Endothelial cell of umbilical vein (primary cell): ENCODE measurements at regions of chr4 and their contacts with region 1.

Region 1: GRCh38 chr4:98658287-98659105 is at the start of gene TSPAN5:
- DNase-seq: peak; percentile 82
- H3K4me3 ChIP-seq: peak within 1 kb of the TSS; percentile 90 to 97 (median 95)
- H3K27ac ChIP-seq: peak within 1 kb of the TSS; percentile 94
- H3K4me1 ChIP-seq: peaks cover 61% of the 10 kb centered on the region
- H3K27me3 ChIP-seq: no peaks in the 10 kb centered on the region
- CTCF ChIP-seq: no peak
- POLR2A ChIP-seq: peak; percentile 37
- total RNA-seq, gene TSPAN5: 37.6 and 45.1 TPM in 2 replicates

Region 2: DNA sequence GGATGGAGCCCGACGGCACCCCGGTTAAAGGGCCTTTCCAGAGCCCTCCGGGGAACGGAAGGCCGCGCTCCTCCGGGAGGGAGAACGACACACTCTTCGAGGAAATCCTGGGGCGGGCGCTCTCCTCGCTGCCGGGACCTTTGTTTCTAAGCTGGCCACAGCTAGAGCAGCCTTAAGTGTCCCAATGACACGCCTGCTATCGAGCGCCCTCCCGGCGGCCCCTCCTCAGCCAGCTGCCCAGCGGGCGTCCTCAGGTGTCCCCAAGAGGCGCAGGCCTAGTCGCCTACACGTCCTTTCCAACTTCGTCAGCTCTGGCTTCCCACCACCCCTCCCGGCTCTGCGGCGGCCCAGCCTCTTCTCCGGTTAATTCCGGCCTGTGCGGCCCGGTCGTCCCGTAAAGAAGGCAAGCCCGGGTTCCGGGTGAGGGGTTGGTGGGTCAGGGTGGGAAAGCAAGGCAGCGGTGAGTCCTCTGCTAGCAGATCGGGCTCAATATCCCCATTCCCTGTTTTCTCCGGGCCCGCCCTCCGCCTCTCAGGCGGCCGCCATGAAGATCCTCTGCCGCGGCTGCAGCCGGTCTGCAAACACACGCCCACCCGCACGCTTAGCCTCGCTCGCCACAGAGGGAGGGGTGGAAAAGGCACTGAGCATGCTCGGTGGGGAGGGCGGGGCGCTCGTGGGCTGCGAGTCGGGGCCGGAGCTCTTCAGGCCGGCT is 397.8 kb before region 1 on chr4:
- CTCF ChIA-PET with region 1: no interaction called
- POLR2A ChIA-PET with region 1: no interaction called
- dilution Hi-C with region 1: no loop called
- intact Hi-C with region 1: loop called (anchors 2 kb)
- DNase-seq: peak; percentile 98
- H3K4me3 ChIP-seq: peak overlapping the region; percentile 73 to 76 (median 73)
- H3K27ac ChIP-seq: peak overlapping the region; percentile 86
- H3K4me1 ChIP-seq: peaks cover 22% of the 10 kb centered on the region
- H3K27me3 ChIP-seq: no peaks in the 10 kb centered on the region
- CTCF ChIP-seq: no peak
- POLR2A ChIP-seq: peak; percentile 94

Region 3: DNA sequence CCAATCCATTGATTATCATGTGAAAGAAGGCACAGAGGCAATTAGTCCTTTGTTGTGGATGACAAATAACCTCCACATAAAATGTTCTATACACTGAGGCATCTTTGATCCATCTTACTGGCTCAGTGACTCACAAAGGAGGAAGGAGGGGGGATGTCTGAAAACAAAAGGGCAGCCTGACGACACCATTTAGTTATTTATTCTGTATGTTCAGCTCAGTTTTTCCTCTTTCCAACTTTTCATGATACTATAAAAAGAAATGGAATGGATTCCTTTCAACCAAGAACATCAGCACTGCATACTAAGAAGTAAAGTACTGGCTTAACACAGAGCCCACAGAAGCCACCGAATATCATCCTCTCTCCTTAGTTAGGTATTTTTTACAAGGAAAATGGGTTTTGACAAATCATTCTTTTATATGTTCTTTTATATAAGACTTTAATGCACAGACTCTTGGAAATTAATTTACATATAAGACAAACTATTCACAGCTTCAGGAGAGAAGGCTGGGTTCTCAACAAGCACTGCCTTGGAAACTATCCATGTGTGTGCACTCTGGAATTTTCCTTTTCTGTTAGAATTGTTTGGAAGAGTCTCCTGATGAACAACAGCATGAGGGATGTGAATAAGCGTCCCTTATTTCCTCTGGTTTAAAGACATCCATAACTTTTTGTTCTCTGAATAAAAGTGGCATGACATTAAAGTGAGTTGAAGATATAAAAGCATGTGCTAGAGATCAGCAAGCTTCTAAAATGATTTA is 135.7 kb before region 1 on chr4:
- CTCF ChIA-PET with region 1: interaction called, 3 read pairs
- POLR2A ChIA-PET with region 1: no interaction called
- dilution Hi-C with region 1: no loop called
- intact Hi-C with region 1: loop called (anchors 2 kb)
- DNase-seq: peak; percentile 91
- H3K4me3 ChIP-seq: peak overlapping the region in 1 of 3 experiments; percentile 45
- H3K27ac ChIP-seq: peak overlapping the region; percentile 97
- H3K4me1 ChIP-seq: peaks cover 52% of the 10 kb centered on the region
- H3K27me3 ChIP-seq: no peaks in the 10 kb centered on the region
- CTCF ChIP-seq: no peak
- POLR2A ChIP-seq: no peak

Region 4: DNA sequence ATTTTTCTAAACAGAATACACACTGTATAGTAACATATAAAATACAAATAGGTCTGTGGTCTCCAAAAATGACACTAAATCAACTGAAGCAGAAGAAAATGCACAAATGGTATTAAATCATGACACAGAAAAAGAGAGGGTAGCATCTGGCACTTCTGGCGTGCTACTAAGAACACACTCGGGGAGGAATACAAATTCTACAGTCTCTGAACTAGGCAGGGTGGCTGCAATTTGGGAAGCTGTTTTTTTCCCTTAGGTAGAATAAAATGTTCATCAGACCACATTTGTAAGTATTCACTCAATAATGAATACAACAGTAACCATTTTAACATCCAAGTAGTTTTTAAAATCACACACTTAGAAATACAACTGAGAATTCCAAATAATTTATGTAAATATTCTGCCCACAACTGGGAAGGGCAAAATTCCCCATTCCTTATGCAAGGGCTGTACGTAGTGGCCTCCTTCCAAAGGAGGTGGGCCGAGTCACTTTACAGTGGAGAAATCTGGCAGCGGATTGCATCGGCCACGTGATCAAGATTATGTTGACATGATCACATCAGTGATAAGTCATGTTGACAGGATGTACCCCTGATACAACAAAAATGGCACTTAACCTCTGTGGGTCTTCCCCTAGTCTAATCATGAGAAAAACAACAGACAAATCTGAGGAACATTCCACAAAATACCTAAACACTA is 101.2 kb before region 1 on chr4:
- CTCF ChIA-PET with region 1: no interaction called
- POLR2A ChIA-PET with region 1: no interaction called
- dilution Hi-C with region 1: no loop called
- intact Hi-C with region 1: no loop called
- DNase-seq: peak; percentile 70
- H3K4me3 ChIP-seq: no peak overlapping the region
- H3K27ac ChIP-seq: no peak overlapping the region
- H3K4me1 ChIP-seq: peaks cover 13% of the 10 kb centered on the region
- H3K27me3 ChIP-seq: no peaks in the 10 kb centered on the region
- CTCF ChIP-seq: no peak
- POLR2A ChIP-seq: no peak

Region 5: GRCh38 chr4:98642991-98643426 is 15.5 kb before region 1 on chr4:
- CTCF ChIA-PET with region 1: interaction called, 4 read pairs
- POLR2A ChIA-PET with region 1: no interaction called
- dilution Hi-C with region 1: no loop called
- intact Hi-C with region 1: loop called (anchors 1 kb)
- DNase-seq: peak; percentile 85
- H3K4me3 ChIP-seq: no peak overlapping the region
- H3K27ac ChIP-seq: peak overlapping the region; percentile 23
- H3K4me1 ChIP-seq: peaks cover 30% of the 10 kb centered on the region
- H3K27me3 ChIP-seq: no peaks in the 10 kb centered on the region
- CTCF ChIP-seq: no peak
- POLR2A ChIP-seq: no peak

Region 6: DNA sequence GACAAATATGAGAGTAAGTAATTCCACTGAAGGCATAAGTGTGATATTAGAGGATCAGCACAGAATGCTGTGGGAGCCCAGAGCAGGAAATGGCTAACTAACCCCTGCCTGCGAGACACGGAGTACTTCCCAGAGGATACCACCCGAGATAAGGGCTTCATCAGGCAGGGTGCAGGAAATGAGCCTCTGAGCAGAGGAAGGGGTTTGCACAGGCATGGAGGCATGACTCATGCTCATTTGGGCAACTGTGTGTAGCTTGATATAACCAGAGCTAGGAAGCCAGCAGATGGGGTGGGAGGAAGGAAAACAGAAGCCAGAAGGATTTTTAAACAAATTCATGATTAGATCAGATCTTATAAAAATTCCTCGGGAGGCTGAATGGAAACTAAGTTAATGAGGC is 69.9 kb after region 1 on chr4:
- CTCF ChIA-PET with region 1: interaction called, 5 read pairs
- POLR2A ChIA-PET with region 1: no interaction called
- dilution Hi-C with region 1: no loop called
- intact Hi-C with region 1: loop called (anchors 1 kb)
- DNase-seq: peak; percentile 96
- H3K4me3 ChIP-seq: peak overlapping the region in 1 of 3 experiments; percentile 7
- H3K27ac ChIP-seq: peak overlapping the region; percentile 72
- H3K4me1 ChIP-seq: peaks cover 18% of the 10 kb centered on the region
- H3K27me3 ChIP-seq: no peaks in the 10 kb centered on the region
- CTCF ChIP-seq: peak in 1 of 2 donors; percentile 0
- POLR2A ChIP-seq: no peak

Region 7: DNA sequence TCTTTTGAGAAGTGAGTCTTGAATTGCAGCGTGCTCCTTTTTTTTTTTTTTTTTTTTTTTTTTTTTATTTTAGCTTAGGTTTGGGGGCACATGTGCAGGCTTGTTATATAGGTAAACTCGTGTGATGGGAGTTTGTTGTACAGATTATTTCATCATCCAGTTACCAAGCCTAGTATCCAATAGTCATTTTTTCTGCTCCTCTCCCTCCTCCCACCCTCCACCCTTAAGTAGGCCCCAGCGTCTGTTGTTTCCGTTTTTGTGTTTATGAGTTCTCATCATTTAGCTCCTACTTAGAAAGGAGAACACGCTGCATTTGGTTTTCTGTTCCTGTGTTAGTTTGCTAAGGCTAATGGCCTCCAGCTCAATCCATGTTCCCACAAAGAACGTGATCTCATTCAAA is 81.3 kb after region 1 on chr4:
- CTCF ChIA-PET with region 1: no interaction called
- POLR2A ChIA-PET with region 1: no interaction called
- dilution Hi-C with region 1: no loop called
- intact Hi-C with region 1: no loop called
- DNase-seq: no peak
- H3K4me3 ChIP-seq: no peak overlapping the region
- H3K27ac ChIP-seq: no peak overlapping the region
- H3K4me1 ChIP-seq: peaks cover 7% of the 10 kb centered on the region
- H3K27me3 ChIP-seq: no peaks in the 10 kb centered on the region
- CTCF ChIP-seq: no peak
- POLR2A ChIP-seq: no peak

Region 8: GRCh38 chr4:99088481-99089365 is 430.2 kb after region 1 on chr4 and contains the start of gene ADH5:
- CTCF ChIA-PET with region 1: no interaction called
- POLR2A ChIA-PET with region 1: no interaction called
- dilution Hi-C with region 1: no loop called
- intact Hi-C with region 1: loop called (anchors 10 kb)
- DNase-seq: peak; percentile 72
- H3K4me3 ChIP-seq: peak within 1 kb of the TSS; percentile 80 to 98 (median 82)
- H3K27ac ChIP-seq: peak within 1 kb of the TSS; percentile 66
- H3K4me1 ChIP-seq: peaks cover 8% of the 10 kb centered on the region
- H3K27me3 ChIP-seq: no peaks in the 10 kb centered on the region
- CTCF ChIP-seq: no peak
- POLR2A ChIP-seq: peak; percentile 91
- total RNA-seq, gene ADH5: 101 and 103 TPM in 2 replicates